B cell (primary cell): ENCODE measurements at regions of chr9 and their contacts with region 1.

Region 1: DNA sequence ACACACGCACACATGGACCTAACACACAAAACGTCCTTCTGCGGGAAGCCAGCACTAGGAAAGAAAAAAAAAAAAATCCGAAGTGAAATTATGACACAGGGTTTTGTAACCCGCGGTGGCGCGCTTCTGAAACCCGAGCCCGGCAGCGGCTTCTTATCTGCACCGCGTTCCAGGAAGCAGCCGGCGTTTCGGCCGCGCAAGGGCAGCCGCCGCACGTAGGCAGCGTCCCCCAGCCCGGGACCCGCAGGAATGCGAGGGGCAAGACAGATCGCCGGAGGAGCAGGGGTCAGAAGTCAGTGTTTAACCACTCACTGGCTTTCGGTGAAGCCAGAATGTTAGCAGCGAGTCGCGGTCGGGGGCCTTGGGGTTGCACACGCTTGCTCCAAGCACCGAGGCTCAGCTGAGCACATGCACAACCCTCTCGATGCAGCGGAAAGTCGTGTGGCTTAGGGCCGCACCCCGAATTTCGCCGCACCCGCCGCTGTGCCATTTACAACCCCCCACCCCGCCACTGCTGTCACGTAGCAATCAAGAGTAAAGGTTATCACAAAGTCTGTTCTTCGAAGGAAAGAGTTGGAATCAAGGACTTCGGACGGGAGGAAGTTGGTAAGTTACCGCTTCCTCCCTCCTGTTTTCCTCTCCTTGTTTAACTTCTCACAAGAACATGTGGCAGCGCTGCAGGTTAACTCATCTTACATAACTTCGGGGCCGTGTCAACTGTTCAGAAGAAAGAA is 167.9 kb downstream of the AUH start:
- DNase-seq: peak; percentile 76
- ATAC-seq: peak; percentile 69
- H3K4me3 ChIP-seq: peak overlapping the region; percentile 53 to 68 (median 58)
- H3K4me3 Mint-ChIP-seq: peak overlapping the region; percentile 92
- H3K27ac ChIP-seq: peak overlapping the region; percentile 35 to 77
- H3K27ac Mint-ChIP-seq: peak overlapping the region; percentile 88
- H3K4me1 ChIP-seq: peaks cover 27 to 46% of the 10 kb centered on the region in 2 donors
- H3K4me1 Mint-ChIP-seq: peaks cover 28% of the 10 kb centered on the region
- H3K27me3 ChIP-seq: no peaks in the 10 kb centered on the region
- H3K27me3 Mint-ChIP-seq: no peaks in the 10 kb centered on the region
- CTCF ChIP-seq: no peak

Region 2: DNA sequence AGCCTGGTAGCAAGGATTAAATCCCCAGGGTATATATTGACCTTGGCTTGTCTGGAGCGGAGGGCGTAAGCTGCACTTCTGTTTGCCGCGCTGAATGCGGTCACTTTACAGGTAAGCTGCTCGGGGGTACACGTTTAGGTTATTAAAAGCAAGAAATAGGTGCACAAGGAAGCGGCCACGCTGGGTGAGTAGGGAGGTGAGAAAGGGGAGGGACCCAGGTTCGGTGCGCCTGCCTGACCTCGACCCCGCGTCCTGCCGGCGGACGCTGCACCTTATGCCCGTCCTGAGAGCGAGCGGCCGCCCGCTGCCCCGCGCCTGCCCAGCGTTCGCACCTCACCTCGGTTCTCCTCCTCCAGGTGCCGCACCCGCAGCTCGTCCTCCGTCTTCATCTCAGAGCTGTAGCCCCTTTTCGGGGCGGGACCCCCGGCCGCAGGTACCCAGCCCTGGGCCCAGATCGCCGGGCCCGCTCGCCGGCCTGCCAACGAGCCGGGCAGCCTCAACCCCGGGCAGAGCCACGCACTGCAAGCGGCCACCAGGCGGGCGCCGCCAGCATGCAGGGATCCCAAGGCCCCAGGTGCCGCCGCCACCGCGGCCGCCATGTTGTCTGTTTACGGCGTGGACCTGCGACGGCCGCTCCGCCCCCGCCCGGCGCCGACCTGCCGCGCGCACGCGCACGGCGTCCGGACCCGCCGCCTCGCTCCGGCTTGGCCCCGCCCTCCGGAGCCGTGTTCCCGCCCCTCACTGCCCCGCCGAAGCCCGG is 167.6 kb after region 1 on chr9 and contains the start of gene AUH:
- CTCF ChIA-PET with region 1: no interaction called
- POLR2A ChIA-PET with region 1: no interaction called
- intact Hi-C with region 1: loop called (anchors 5 kb)
- DNase-seq: peak; percentile 92
- ATAC-seq: peak; percentile 96
- H3K4me3 ChIP-seq: peak within 1 kb of the TSS; percentile 70 to 94 (median 78)
- H3K4me3 Mint-ChIP-seq: peak within 1 kb of the TSS; percentile 98
- H3K27ac ChIP-seq: peak within 1 kb of the TSS; percentile 45 to 77
- H3K27ac Mint-ChIP-seq: peak within 1 kb of the TSS; percentile 95
- H3K4me1 ChIP-seq: peaks cover 16 to 19% of the 10 kb centered on the region in 2 donors
- H3K4me1 Mint-ChIP-seq: peaks cover 37% of the 10 kb centered on the region
- H3K27me3 ChIP-seq: no peaks in the 10 kb centered on the region
- H3K27me3 Mint-ChIP-seq: no peaks in the 10 kb centered on the region
- CTCF ChIP-seq: peak; percentile 36
- total RNA-seq, gene AUH: 29.1 and 32.7 TPM in 2 replicates